Activated T-helper 1 cell treated with anti-CD3 and anti-CD28 coated beads, Interleukin-12 subunit alpha, Interleukin-12 subunit beta, Interleukin-2, Interleukin-4 antibody, amounts not matched to agents 30 ng/mL and 10 ng/mL and 1 ng/mL, durations not matched to agents 14 hours and 24 hours and 36 hours (primary cell): ENCODE measurements at regions of chr3 and their contacts with region 1.

Region 1: DNA sequence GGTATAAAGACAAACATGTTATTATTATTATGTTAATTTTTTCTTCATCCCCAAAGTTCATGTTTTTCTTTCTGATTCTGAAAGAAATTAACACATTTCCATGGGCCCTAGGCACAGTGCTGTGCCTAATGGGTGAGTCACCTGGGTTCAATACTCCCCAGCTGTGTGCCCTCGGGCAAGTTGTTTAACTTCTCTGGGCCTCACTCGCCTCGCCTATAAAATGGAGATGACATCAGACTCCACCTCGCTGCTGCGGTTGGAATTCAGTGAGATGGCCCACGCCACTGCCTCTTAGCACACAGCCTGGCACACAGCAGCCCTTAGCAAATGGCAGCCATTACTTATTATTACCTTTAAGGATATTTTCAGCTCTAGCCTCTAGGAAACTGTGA is 22.6 kb downstream of the DNASE1L3 start:
- DNase-seq: no peak
- H3K4me3 Mint-ChIP-seq: no peak overlapping the region
- H3K27ac Mint-ChIP-seq: no peak overlapping the region
- H3K4me1 Mint-ChIP-seq: no peaks in the 10 kb centered on the region
- H3K27me3 Mint-ChIP-seq: no peaks in the 10 kb centered on the region

Region 2: DNA sequence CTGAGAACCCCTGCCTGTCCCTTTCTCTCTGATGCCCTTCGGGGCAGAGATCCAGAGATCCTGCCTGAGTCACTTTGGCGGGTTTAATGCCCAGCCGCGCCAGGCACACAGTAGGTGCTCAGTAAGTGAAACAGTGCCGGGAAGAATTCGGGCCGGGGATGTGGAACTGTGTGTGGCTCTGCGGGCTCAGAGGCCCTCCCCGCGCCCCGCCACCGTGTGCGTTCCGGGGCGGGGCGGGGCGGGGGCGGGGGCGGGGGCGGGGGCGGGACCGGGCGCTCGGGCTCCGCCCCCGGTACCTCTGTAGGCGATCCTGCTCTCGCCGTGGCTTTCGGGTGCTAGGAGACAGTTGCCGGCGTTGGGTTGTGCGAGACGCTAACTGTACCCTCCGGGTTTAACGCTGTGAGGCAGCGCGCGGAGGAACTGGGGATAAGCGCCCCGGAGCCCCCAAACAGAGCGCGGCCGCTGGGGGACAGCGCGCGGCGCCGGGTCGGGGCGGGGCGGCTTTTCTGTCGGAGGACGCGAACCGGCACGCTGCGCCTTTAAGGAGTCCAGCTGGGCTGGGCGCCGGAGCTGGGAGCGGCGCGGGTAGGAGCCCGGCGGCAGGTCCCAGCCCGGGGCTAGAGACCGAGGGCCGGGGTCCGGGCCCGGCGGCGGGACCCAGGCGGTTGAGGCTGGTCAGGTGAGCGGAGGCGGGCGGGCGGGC is 49.2 kb after region 1 on chr3 and contains the start of gene ABHD6:
- intact Hi-C with region 1: loop called (anchors 5 kb)
- DNase-seq: peak; percentile 78
- H3K4me3 Mint-ChIP-seq: peak within 1 kb of the TSS; percentile 90
- H3K27ac Mint-ChIP-seq: peak within 1 kb of the TSS; percentile 67
- H3K4me1 Mint-ChIP-seq: peaks cover 12% of the 10 kb centered on the region
- H3K27me3 Mint-ChIP-seq: peaks cover 32% of the 10 kb centered on the region
- total RNA-seq, gene ABHD6: 9.2 and 10.1 TPM in 2 replicates

Region 3: DNA sequence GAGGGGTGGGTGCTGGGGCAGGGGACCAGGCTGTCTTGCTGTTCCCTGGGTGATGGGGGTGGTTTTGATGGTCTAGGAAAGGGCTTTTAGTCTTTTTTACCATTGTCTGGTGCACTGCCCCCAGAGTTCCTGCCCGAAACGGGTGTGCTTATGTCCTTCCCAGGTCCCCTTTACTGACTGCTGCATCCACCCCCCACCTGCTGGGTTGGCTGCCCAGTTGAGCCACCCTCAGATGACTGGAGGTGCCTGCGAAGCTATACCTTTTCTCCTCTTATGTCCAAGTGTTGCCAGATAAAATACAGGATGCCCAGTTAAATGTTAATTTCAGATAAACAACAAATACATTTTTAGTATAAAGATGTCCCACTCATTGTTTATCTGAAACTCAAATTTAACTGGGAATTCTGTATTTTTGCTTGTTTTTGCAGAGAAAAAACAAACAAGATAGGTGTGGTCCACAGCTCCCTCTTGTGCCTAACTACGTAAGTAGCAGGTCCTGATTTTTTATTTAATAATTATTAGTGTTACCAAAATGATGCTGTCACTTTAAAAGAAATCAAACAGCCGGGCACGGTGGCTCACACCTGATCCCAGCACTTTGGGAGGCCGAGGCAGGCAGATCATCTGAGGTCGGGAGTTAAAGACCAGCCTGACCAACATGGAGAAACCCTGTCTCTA is 111.8 kb after region 1 on chr3:
- intact Hi-C with region 1: loop called (anchors 1 kb)
- DNase-seq: no peak
- H3K4me3 Mint-ChIP-seq: no peak overlapping the region
- H3K27ac Mint-ChIP-seq: no peak overlapping the region
- H3K4me1 Mint-ChIP-seq: no peaks in the 10 kb centered on the region
- H3K27me3 Mint-ChIP-seq: peaks cover 27% of the 10 kb centered on the region

Region 4: DNA sequence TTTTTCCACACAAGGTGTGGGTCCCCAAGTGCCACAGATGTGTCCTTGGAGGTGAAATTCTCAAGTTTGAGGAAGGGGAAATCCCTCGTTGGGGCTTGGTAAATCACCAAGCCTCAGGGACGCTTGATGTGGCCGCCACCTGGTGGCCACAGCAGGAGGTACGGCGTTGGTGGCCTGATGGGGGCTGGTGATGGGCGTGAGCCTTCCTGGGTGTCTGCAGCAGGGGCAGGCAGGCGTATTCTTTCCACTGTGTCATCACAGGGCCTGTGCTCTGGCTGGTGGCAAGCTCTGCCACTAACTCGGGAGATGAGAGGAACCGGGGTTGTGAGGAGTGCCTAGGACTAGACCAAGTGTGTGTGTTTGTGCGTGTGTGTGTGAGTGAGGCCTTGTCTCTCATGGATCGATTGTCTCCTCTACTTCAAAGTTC is 344.6 kb after region 1 on chr3:
- intact Hi-C with region 1: loop called (anchors 1 kb)
- DNase-seq: peak; percentile 75
- H3K4me3 Mint-ChIP-seq: no peak overlapping the region
- H3K27ac Mint-ChIP-seq: peak overlapping the region; percentile 8
- H3K4me1 Mint-ChIP-seq: peaks cover 13% of the 10 kb centered on the region
- H3K27me3 Mint-ChIP-seq: peaks cover 15% of the 10 kb centered on the region

Region 5: GRCh38 chr3:58630076-58630709 is 442.0 kb after region 1 on chr3:
- intact Hi-C with region 1: loop called (anchors 1 kb)
- DNase-seq: peak; percentile 46
- H3K4me3 Mint-ChIP-seq: no peak overlapping the region
- H3K27ac Mint-ChIP-seq: no peak overlapping the region
- H3K4me1 Mint-ChIP-seq: no peaks in the 10 kb centered on the region
- H3K27me3 Mint-ChIP-seq: no peaks in the 10 kb centered on the region

Region 6: DNA sequence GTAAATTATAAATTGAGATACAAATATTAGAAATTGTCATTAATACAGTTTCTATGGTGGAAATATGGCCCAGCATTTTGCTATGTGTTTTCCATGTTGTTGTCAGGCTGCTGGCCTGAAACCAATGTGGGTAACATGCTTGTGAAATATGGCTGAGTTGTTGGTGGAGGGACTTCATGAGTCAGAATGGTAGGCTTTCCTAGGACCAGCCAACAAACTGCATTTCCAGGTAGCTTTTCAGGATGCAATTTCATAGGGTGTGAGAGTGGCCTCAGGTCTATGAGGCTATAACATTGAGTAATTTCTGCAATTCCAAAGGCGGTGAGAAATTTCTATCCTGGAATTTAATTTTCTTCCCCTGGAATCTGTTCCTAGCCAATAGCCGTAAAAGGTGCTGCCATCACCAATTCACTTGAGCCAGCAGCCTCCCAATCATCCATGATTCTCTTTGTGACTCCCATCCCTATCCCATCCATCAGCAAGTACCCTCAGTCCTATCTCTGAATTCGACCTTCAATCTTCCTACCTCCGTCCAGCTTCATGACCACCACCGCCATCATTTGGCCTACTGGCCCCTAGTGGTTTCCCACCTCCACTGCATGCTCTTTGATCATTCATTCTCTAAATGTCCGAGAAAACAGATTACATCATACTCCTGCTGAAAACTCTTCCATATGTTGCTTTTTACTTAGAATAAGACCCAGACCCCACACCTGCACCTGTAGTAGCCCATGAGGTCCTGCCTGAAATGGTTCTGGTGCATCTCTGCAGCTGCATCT is 1138.3 kb after region 1 on chr3:
- intact Hi-C with region 1: no loop called
- DNase-seq: no peak
- H3K4me3 Mint-ChIP-seq: no peak overlapping the region
- H3K27ac Mint-ChIP-seq: no peak overlapping the region
- H3K4me1 Mint-ChIP-seq: no peaks in the 10 kb centered on the region
- H3K27me3 Mint-ChIP-seq: no peaks in the 10 kb centered on the region